ENCODE measurements at regions of chr5 and their contacts with region 1.

Region 1: GRCh38 chr5:150449517-150450339 is at the start of gene RPS14:
- DNase-seq: peak; percentile 82 to 94
- H3K4me3 ChIP-seq: peak within 1 kb of the TSS; percentile 93
- H3K27ac ChIP-seq: peak within 1 kb of the TSS; percentile 86
- H3K4me1 ChIP-seq: peaks cover 12% of the 10 kb centered on the region
- H3K27me3 ChIP-seq: no peaks in the 10 kb centered on the region
- CTCF ChIP-seq: peak; percentile 98
- total RNA-seq, gene RPS14: 2,907 and 3,838 TPM in 2 replicates

Region 2: DNA sequence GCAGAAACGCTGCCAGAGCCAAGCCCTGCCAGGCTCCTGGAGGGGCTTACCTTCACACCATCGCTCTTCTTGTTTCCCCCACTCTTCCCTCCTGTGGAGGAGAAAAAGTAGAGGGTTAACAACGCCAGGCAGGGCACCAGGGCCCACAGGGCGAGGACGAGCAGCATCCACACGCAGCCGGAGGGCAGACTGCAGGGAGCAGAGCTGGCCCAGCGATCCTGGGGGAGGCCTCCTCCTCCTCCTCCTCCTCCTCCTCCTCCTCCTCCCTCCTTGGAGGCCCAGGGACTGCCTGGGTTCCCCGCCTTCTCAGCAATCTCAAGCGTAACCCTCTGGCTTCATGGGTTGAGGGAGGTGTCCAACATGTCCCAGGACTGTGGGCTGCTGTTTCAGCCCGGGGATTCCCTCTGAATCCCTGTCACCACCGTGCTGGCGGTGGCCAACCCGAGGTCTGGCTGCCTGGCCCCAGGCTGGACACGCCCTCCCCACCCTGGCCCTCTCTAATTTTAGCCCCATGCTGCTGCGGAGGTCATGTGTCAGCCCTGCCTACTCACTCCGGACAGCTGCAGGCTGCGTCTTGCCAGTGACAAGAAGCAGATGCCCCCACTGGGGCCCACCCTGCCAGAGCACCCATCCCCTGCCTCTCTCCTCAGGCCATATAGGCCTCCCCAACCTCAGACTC is 204.5 kb before region 1 on chr5:
- CTCF ChIA-PET with region 1: no interaction called
- POLR2A ChIA-PET with region 1: no interaction called
- intact Hi-C with region 1: no loop called
- DNase-seq: peak in 1 of 2 experiments; percentile 17
- H3K4me3 ChIP-seq: no peak overlapping the region
- H3K27ac ChIP-seq: no peak overlapping the region
- H3K4me1 ChIP-seq: no peaks in the 10 kb centered on the region
- H3K27me3 ChIP-seq: 0 out of 2 replicates have a peak, but pooled peaks cover 4% of the 10 kb centered on the region
- CTCF ChIP-seq: no peak

Region 3: DNA sequence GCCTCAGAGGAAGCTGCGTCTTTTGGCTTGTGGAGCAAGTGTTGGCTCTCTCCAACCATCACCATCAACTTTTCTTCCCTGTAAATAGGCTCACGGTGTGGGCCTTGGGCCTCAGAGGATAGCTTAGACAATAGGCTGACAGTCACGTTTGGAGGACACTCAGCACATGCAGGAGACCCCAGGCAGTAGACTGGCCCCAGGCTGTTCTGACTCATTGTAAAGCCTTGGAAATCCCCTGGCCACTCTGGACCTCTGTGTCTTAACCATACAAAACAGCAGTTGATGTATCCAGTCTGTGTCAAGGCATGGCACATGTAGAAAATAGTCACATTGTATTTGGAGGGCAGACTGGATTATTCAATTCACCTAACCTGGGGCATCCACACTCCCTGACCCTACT is 55.6 kb before region 1 on chr5:
- CTCF ChIA-PET with region 1: no interaction called
- POLR2A ChIA-PET with region 1: no interaction called
- intact Hi-C with region 1: no loop called
- DNase-seq: no peak
- H3K4me3 ChIP-seq: no peak overlapping the region
- H3K27ac ChIP-seq: no peak overlapping the region
- H3K4me1 ChIP-seq: no peaks in the 10 kb centered on the region
- H3K27me3 ChIP-seq: no peaks in the 10 kb centered on the region
- CTCF ChIP-seq: no peak

Region 4: GRCh38 chr5:150599917-150600499 is 150.3 kb after region 1 on chr5:
- CTCF ChIA-PET with region 1: no interaction called
- POLR2A ChIA-PET with region 1: no interaction called
- intact Hi-C with region 1: no loop called
- DNase-seq: peak in 1 of 2 experiments; percentile 69
- H3K4me3 ChIP-seq: no peak overlapping the region
- H3K27ac ChIP-seq: no peak overlapping the region
- H3K4me1 ChIP-seq: no peaks in the 10 kb centered on the region
- H3K27me3 ChIP-seq: no peaks in the 10 kb centered on the region
- CTCF ChIP-seq: no peak

Region 5: GRCh38 chr5:150700594-150701293 is 251.0 kb after region 1 on chr5 and contains the start of gene RBM22:
- CTCF ChIA-PET with region 1: no interaction called
- POLR2A ChIA-PET with region 1: interaction called, 4 read pairs
- intact Hi-C with region 1: loop called (anchors 2 kb)
- DNase-seq: peak; percentile 74 to 89
- H3K4me3 ChIP-seq: peak within 1 kb of the TSS; percentile 86
- H3K27ac ChIP-seq: peak within 1 kb of the TSS; percentile 59
- H3K4me1 ChIP-seq: peaks cover 20% of the 10 kb centered on the region; the same call in 1 of the 2 replicates
- H3K27me3 ChIP-seq: no peaks in the 10 kb centered on the region
- CTCF ChIP-seq: peak; percentile 65
- total RNA-seq, gene RBM22: 49.7 and 57.3 TPM in 2 replicates

Region 6: GRCh38 chr5:150846654-150847333 is 397.1 kb after region 1 on chr5:
- CTCF ChIA-PET with region 1: no interaction called
- POLR2A ChIA-PET with region 1: no interaction called
- intact Hi-C with region 1: loop called (anchors 5 kb)
- DNase-seq: peak; percentile 38 to 63
- H3K4me3 ChIP-seq: no peak overlapping the region
- H3K27ac ChIP-seq: no peak overlapping the region
- H3K4me1 ChIP-seq: no peaks in the 10 kb centered on the region
- H3K27me3 ChIP-seq: peaks cover 2% of the 10 kb centered on the region; the same call in 1 of the 2 replicates
- CTCF ChIP-seq: peak; percentile 79